CD8-positive, alpha-beta T cell (primary cell): ENCODE measurements at regions of chr7 and their contacts with region 1.

Region 1: GRCh38 chr7:139359366-139360209 is at the start of gene LUC7L2:
- DNase-seq: peak; percentile 99 to 100 (median 99)
- ATAC-seq: peak; percentile 74
- H3K4me3 ChIP-seq: peak within 1 kb of the TSS; percentile 86 to 97
- H3K4me3 Mint-ChIP-seq: peak within 1 kb of the TSS; percentile 99
- H3K27ac ChIP-seq: peak within 1 kb of the TSS; percentile 93 to 99
- H3K27ac Mint-ChIP-seq: peak within 1 kb of the TSS; percentile 100
- H3K4me1 ChIP-seq: peaks cover 35% of the 10 kb centered on the region
- H3K4me1 Mint-ChIP-seq: peaks cover 41% of the 10 kb centered on the region
- H3K27me3 ChIP-seq: no peaks in the 10 kb centered on the region
- H3K27me3 Mint-ChIP-seq: no peaks in the 10 kb centered on the region
- CTCF ChIP-seq: no peak
- total RNA-seq, gene LUC7L2: 171 to 192 TPM

Region 2: DNA sequence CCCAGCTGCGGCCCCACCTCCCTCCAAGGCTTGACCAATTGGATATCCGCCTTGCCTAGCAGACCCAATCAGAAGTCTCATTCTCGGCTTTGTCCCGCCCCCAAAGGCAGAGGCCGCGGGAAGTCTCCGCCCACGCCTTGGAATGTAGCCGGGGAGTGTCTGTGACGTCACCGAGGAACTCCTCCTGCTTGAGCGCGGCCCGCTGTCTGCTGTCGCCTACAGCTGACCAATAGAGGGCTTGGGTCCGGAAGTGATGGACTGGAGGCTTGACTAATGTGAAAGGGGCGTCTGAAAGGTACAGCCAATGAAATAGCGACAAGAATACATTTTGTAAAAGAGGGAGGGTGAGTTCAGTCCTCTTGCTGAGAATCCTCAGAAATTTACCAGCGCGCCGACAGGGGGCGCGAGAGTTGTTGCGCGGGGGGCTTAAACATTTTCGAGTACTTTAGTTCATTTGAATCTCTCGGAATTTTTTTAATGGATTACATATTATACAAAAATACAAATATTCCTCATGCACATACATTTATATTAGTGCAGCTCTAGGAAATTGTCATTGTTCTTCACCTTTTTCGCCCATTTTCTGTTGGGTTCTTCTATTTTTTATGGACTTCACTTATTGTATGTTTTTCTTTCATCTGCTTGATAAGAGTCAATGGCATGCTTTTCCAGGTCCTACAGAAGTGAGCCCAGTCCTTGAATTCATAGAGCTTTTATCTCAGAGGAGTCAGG is 1357.3 kb before region 1 on chr7:
- CTCF ChIA-PET with region 1: no interaction called
- POLR2A ChIA-PET with region 1: no interaction called
- intact Hi-C with region 1: loop called in 1 of 2 experiments (anchors 10 kb)
- DNase-seq: peak; percentile 96 to 100 (median 98)
- ATAC-seq: peak; percentile 88
- H3K4me3 ChIP-seq: peak overlapping the region; percentile 81 to 97
- H3K4me3 Mint-ChIP-seq: peak overlapping the region; percentile 90
- H3K27ac ChIP-seq: peak overlapping the region; percentile 72 to 85
- H3K27ac Mint-ChIP-seq: peak overlapping the region; percentile 91
- H3K4me1 ChIP-seq: peaks cover 11% of the 10 kb centered on the region
- H3K4me1 Mint-ChIP-seq: peaks cover 33% of the 10 kb centered on the region
- H3K27me3 ChIP-seq: no peaks in the 10 kb centered on the region
- H3K27me3 Mint-ChIP-seq: no peaks in the 10 kb centered on the region
- CTCF ChIP-seq: peak; percentile 96

Region 3: DNA sequence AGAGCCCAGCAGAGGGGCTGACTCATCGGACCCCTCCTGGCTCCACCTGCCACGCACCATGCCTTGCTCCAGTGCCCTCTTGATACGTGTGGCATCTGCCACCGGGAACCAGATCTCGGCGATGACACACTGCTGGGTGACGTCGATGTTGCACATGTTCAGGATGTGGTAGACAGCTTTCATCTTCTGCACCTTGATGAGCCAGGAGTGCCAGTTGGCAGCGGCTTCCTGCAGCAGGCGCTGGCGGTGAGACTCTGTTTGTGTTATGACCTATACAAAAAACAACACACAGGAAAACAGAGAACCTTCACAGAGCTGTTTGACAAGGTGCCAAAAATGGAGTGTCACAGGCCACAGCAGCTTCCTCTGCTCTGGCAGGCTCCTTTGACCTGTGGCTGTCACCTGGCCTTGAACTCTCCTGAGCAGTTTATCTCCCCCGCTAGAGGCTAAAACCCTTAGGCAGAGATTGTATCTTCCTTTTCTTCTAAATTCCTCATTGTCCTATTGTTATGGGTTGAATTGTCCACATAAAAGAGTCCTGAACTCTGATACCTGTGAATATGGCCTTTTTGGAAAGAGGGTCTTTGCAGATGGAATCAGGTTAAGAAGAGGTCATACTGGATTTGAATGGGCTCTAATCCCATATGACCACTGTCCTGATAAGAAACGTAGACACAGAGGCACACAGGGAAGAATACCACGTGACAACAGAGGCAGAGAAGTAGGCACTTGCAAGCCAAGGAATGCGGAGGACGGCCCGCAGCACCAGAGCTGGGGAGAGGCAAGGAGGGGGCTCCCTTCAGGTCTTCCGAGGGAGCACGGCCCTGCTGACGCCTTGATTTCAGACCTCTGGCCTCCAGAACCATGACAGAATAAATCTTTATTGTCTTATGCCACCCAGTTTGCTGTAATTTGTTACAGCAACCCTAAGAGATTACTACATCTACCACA is 606.7 kb before region 1 on chr7:
- CTCF ChIA-PET with region 1: no interaction called
- POLR2A ChIA-PET with region 1: no interaction called
- intact Hi-C with region 1: loop called in 1 of 2 experiments (anchors 2 kb)
- DNase-seq: peak; percentile 85 to 99 (median 91)
- ATAC-seq: peak; percentile 91
- H3K4me3 ChIP-seq: peak overlapping the region in 1 of 2 experiments; percentile 12
- H3K4me3 Mint-ChIP-seq: peak overlapping the region; percentile 49
- H3K27ac ChIP-seq: peak overlapping the region; percentile 53 to 75
- H3K27ac Mint-ChIP-seq: peak overlapping the region; percentile 95
- H3K4me1 ChIP-seq: peaks cover 33% of the 10 kb centered on the region
- H3K4me1 Mint-ChIP-seq: peaks cover 63% of the 10 kb centered on the region
- H3K27me3 ChIP-seq: no peaks in the 10 kb centered on the region
- H3K27me3 Mint-ChIP-seq: no peaks in the 10 kb centered on the region
- CTCF ChIP-seq: no peak

Region 4: DNA sequence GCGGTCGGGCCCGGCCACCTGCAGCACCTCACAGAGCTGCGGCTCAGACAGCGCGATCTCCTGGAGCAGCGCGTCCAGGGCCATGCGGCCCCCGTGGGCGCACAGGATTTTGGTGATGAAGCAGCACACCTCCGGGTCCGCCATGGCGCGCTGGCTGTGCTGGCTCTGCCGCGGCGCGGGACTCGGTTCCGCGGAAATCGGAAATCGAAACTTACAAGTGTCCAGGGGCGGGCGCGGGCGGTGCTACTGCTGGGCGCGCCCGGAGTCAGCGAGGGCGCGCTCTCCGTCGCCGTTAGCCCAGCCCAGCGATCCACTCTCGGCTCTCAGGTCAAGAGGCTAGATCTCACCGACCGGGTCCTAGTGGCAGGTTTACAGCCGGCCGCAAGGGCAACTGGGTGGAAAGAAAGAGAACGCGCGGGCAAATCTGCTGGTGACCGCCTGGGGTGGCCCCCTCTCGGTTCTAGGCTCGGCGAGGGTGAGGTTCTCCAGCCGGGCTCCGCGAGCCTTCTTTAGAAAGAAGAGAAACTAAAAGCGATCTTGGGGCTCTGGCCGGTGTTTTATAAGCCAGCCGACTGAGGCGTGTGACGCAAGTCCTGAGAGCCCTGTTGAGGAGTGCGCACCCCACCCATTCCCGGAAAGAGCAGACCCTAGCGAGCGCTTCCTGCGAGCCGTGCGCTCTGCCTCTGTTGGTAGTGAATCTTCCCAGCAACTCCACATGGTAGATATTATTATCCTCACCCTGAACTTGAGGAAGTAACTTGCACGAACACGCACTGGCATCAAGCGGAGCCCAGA is 250.2 kb before region 1 on chr7 and contains the start of gene ZC3HAV1:
- CTCF ChIA-PET with region 1: no interaction called
- POLR2A ChIA-PET with region 1: no interaction called
- intact Hi-C with region 1: loop called in 1 of 2 experiments (anchors 2 kb)
- DNase-seq: peak; percentile 78 to 97 (median 89)
- ATAC-seq: peak; percentile 87
- H3K4me3 ChIP-seq: peak within 1 kb of the TSS; percentile 81 to 99
- H3K4me3 Mint-ChIP-seq: peak within 1 kb of the TSS; percentile 96
- H3K27ac ChIP-seq: peak within 1 kb of the TSS; percentile 97 to 98
- H3K27ac Mint-ChIP-seq: peak within 1 kb of the TSS; percentile 99
- H3K4me1 ChIP-seq: peaks cover 18% of the 10 kb centered on the region
- H3K4me1 Mint-ChIP-seq: peaks cover 42% of the 10 kb centered on the region
- H3K27me3 ChIP-seq: no peaks in the 10 kb centered on the region
- H3K27me3 Mint-ChIP-seq: no peaks in the 10 kb centered on the region
- CTCF ChIP-seq: no peak
- total RNA-seq, gene ZC3HAV1: 194 to 198 TPM

Region 5: GRCh38 chr7:139340037-139340807 is 19.4 kb before region 1 on chr7:
- CTCF ChIA-PET with region 1: interaction called, 9 read pairs
- POLR2A ChIA-PET with region 1: interaction called, 37 read pairs
- intact Hi-C with region 1: loop called (anchors 1 kb)
- DNase-seq: peak; percentile 95 to 100 (median 97)
- ATAC-seq: peak; percentile 80
- H3K4me3 ChIP-seq: peak overlapping the region; percentile 69 to 85
- H3K4me3 Mint-ChIP-seq: peak overlapping the region; percentile 98
- H3K27ac ChIP-seq: peak overlapping the region; percentile 94 to 98
- H3K27ac Mint-ChIP-seq: peak overlapping the region; percentile 100
- H3K4me1 ChIP-seq: peaks cover 13% of the 10 kb centered on the region
- H3K4me1 Mint-ChIP-seq: peaks cover 32% of the 10 kb centered on the region
- H3K27me3 ChIP-seq: no peaks in the 10 kb centered on the region
- H3K27me3 Mint-ChIP-seq: peaks cover 2% of the 10 kb centered on the region
- CTCF ChIP-seq: peak; percentile 36

Region 6: DNA sequence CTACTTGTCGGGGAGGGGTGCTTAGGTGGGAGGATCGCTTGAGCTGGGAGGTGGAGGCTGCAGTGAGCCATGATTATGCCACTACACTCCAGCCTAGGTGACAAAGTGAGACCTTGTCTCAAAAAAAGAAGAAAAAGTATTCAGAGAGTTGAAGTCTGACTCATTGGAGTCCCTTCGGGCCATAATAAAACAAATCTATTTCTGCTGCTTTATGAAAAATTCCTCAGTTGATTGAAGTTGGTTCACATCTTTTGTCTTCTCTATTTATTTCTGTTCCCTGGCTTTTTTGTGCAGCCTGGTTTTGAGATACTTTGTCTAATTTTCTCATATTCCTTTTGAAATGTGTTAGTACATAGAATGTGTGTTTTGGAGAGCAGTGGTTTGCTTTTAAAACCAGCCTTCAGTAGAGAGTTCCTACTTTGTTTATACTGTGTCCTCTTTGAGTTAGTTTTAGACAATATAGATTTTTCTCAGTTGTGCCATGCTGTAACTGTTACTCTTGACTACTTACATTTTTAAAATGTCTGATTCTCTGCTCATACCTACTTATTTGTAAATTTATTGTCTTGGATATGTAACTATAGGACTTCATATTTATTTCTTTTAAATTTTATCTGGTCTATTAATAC is 36.8 kb after region 1 on chr7:
- CTCF ChIA-PET with region 1: no interaction called
- POLR2A ChIA-PET with region 1: interaction called, 5 read pairs
- intact Hi-C with region 1: loop called in 1 of 2 experiments (anchors 5 kb)
- DNase-seq: no peak
- ATAC-seq: no peak
- H3K4me3 ChIP-seq: no peak overlapping the region
- H3K4me3 Mint-ChIP-seq: no peak overlapping the region
- H3K27ac ChIP-seq: no peak overlapping the region
- H3K27ac Mint-ChIP-seq: peak overlapping the region; percentile 67
- H3K4me1 ChIP-seq: peaks cover 33% of the 10 kb centered on the region
- H3K4me1 Mint-ChIP-seq: peaks cover 47% of the 10 kb centered on the region
- H3K27me3 ChIP-seq: no peaks in the 10 kb centered on the region
- H3K27me3 Mint-ChIP-seq: no peaks in the 10 kb centered on the region
- CTCF ChIP-seq: no peak

Region 7: GRCh38 chr7:139777948-139778841 is 418.6 kb after region 1 on chr7 and contains the start of gene HIPK2:
- CTCF ChIA-PET with region 1: no interaction called
- POLR2A ChIA-PET with region 1: no interaction called
- intact Hi-C with region 1: loop called in 1 of 2 experiments (anchors 5 kb)
- DNase-seq: peak; percentile 40 to 84 (median 72)
- ATAC-seq: peak; percentile 60
- H3K4me3 ChIP-seq: peak within 1 kb of the TSS; percentile 73
- H3K4me3 Mint-ChIP-seq: peak within 1 kb of the TSS; percentile 98
- H3K27ac ChIP-seq: peak within 1 kb of the TSS; percentile 62 to 70
- H3K27ac Mint-ChIP-seq: peak within 1 kb of the TSS; percentile 96
- H3K4me1 ChIP-seq: peaks cover 35% of the 10 kb centered on the region
- H3K4me1 Mint-ChIP-seq: peaks cover 45% of the 10 kb centered on the region
- H3K27me3 ChIP-seq: no peaks in the 10 kb centered on the region
- H3K27me3 Mint-ChIP-seq: peaks cover 5% of the 10 kb centered on the region
- CTCF ChIP-seq: no peak
- total RNA-seq, gene HIPK2: 19.8 to 21.3 TPM